ENCODE measurements at regions of chr16 and their contacts with region 1.

Region 1: GRCh38 chr16:86065711-86066110 is 166.7 kb downstream of the IRF8 start:
- DNase-seq: no peak
- H3K4me3 ChIP-seq: no peak overlapping the region
- H3K27ac ChIP-seq: no peak overlapping the region
- H3K4me1 ChIP-seq: no peaks in the 10 kb centered on the region
- H3K27me3 ChIP-seq: no peaks in the 10 kb centered on the region
- CTCF ChIP-seq: no peak
- POLR2A ChIP-seq: no peak

Region 2: DNA sequence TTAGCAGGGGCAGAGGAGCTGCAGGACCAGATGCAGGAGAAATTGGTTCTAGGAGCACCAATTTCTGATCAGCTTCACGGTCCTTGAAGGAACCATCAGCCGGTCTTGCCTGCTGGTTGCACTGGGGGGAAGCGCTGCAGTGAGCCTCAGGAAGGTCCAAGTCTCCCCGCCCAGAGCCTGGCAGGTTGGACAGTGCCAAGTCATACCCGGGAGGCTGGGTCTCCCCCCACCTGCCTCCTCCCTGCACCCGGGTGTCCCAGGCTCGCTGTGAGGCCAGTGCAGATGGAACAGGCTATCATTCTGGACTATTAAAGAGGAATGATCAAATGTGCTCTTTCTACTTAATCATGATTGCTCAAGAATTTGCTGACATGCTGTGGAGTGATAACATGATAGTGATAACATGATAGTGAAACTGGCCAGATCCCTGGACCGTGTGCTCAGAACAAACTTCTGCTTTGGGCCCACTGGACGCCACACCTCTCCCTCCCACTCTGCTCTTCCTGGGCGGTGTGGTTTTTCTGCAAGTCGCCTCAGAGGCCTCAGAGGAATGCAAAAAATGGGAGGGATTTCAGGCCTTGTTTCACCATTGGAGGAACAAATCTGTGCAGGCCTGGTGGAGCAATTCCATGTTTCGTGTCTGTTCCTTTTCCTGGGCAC is 69.2 kb after region 1 on chr16:
- intact Hi-C with region 1: loop called (anchors 2 kb)
- DNase-seq: no peak
- H3K4me3 ChIP-seq: no peak overlapping the region
- H3K27ac ChIP-seq: no peak overlapping the region
- H3K4me1 ChIP-seq: no peaks in the 10 kb centered on the region
- H3K27me3 ChIP-seq: no peaks in the 10 kb centered on the region
- CTCF ChIP-seq: no peak
- POLR2A ChIP-seq: no peak

Region 3: GRCh38 chr16:86634292-86634691 is 568.6 kb after region 1 on chr16:
- intact Hi-C with region 1: no loop called
- DNase-seq: no peak
- H3K4me3 ChIP-seq: no peak overlapping the region
- H3K27ac ChIP-seq: no peak overlapping the region
- H3K4me1 ChIP-seq: no peaks in the 10 kb centered on the region
- H3K27me3 ChIP-seq: no peaks in the 10 kb centered on the region
- CTCF ChIP-seq: no peak
- POLR2A ChIP-seq: no peak